ENCODE measurements at regions of chr11 and their contacts with region 1.

Region 1: GRCh38 chr11:108144615-108145014 is 23.2 kb downstream of the ACAT1 start:
- DNase-seq: peak in 1 of 2 experiments; percentile 11
- H3K4me3 ChIP-seq: no peak overlapping the region
- H3K27ac ChIP-seq: no peak overlapping the region
- H3K4me1 ChIP-seq: no peaks in the 10 kb centered on the region
- H3K27me3 ChIP-seq: no peaks in the 10 kb centered on the region
- CTCF ChIP-seq: no peak

Region 2: DNA sequence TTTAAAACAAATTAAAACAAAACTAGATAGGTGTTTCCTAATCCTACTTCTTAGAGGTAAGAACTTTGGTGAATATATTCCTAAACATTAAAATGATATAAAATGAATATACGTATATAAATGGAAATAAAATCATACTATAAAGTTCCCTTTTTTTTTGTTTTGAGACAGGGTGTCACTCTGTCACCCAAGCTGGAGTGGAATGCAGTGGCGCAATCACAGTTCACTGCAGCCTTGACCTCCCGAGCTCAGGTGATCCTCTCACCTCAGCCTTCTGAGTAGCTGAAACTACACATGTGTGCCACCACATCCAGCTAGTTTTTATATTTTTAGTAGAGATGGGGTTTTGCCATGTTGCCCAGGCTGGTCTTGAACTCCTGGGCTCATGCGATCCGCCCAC is 33.0 kb after region 1 on chr11:
- CTCF ChIA-PET with region 1: no interaction called
- POLR2A ChIA-PET with region 1: no interaction called
- intact Hi-C with region 1: loop called (anchors 5 kb)
- DNase-seq: no peak
- H3K4me3 ChIP-seq: no peak overlapping the region
- H3K27ac ChIP-seq: no peak overlapping the region
- H3K4me1 ChIP-seq: no peaks in the 10 kb centered on the region
- H3K27me3 ChIP-seq: no peaks in the 10 kb centered on the region
- CTCF ChIP-seq: no peak